ENCODE measurements at regions of chr15 and their contacts with region 1.

Region 1: DNA sequence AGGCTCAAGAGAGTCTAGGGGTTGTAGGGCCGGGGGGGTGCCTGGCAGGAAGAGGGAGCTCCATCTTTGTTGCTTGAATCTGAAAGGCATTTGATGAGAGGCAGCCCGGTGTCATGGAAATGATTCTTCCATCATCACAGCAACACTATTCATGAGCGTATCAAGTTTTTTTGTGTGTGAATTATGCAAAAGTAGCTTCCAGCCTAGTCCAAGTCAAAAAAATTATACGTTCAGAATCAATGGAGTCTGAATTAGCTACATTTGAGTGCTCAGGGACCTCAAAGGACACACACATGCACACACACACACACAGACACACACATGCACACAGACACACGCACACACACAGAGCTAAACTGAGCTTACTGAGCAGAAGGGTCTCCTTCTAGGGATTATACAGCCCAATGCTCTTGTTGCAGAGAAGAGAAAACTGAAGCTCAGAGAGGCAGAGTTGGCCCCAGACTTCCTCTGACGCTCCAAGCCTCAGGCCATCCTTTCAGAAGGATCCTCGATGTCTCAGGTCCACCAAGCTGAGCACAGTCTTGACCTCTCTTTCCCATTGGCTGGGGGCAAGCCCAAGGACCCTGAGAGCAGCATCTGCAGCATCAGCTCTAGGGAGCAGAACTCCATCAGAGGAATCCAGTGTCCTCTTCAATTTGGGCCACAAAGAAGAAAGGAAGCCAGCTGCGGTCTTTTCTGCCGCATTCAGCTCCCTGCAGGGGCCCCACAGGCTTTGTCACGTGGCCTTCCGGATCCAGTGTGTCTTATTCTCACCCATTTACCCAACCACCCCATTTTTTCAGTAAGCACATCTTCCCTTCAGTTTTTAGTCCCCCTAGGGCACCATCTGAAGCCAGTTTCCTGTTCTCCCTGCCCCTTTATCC is 228.0 kb downstream of the UACA start:
- DNase-seq: peak; percentile 25 to 81 (median 67)
- ATAC-seq: peak; percentile 77
- H3K4me3 ChIP-seq: peak overlapping the region; percentile 63 to 67
- H3K4me3 Mint-ChIP-seq: peak overlapping the region; percentile 86
- H3K27ac ChIP-seq: peak overlapping the region; percentile 61 to 78
- H3K27ac Mint-ChIP-seq: peak overlapping the region; percentile 94
- H3K4me1 ChIP-seq: peaks cover 46% of the 10 kb centered on the region
- H3K4me1 Mint-ChIP-seq: peaks cover 75% of the 10 kb centered on the region
- H3K27me3 ChIP-seq: no peaks in the 10 kb centered on the region
- H3K27me3 Mint-ChIP-seq: no peaks in the 10 kb centered on the region
- CTCF ChIP-seq: no peak

Region 2: DNA sequence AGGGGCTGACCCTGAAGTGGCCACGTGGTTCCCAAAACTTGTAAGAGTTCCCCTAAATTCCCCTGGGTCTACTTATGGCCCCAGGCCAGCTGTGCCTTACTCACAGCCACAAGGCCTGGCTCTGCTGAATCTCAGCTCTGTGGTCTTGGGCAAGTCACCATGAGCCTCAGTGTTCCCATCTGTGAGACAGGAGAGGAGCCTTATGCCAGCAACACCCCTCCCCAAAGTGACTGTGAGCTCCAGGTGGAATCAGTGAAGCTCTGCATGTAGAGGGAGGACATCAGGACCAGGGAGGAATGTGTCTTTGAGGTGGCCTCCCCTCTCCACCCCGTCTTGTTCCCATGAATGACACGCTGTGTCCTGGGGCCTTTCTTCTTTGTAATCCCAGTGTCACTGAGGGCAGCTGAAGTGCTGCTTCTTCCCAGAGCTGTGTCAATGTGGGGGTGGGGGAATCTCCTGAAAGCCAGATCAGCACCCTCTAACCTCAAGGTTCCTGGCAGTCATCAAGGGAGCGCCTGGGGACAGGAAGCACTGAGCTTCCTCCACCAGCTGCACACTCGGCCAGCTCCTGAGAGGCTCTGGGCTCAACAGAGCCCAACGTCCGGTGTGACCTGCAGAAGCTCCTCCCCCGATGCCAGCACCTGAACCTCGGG is 30.9 kb before region 1 on chr15:
- CTCF ChIA-PET with region 1: interaction called, 3 read pairs
- POLR2A ChIA-PET with region 1: interaction called, 14 read pairs
- intact Hi-C with region 1: no loop called
- DNase-seq: peak in 2 of 9 experiments; percentile 18 to 49
- ATAC-seq: no peak
- H3K4me3 ChIP-seq: peak overlapping the region in 1 of 2 experiments; percentile 13
- H3K4me3 Mint-ChIP-seq: peak overlapping the region; percentile 53
- H3K27ac ChIP-seq: no peak overlapping the region
- H3K27ac Mint-ChIP-seq: no peak overlapping the region
- H3K4me1 ChIP-seq: peaks cover 45% of the 10 kb centered on the region
- H3K4me1 Mint-ChIP-seq: peaks cover 57% of the 10 kb centered on the region
- H3K27me3 ChIP-seq: no peaks in the 10 kb centered on the region
- H3K27me3 Mint-ChIP-seq: no peaks in the 10 kb centered on the region
- CTCF ChIP-seq: no peak

Region 3: DNA sequence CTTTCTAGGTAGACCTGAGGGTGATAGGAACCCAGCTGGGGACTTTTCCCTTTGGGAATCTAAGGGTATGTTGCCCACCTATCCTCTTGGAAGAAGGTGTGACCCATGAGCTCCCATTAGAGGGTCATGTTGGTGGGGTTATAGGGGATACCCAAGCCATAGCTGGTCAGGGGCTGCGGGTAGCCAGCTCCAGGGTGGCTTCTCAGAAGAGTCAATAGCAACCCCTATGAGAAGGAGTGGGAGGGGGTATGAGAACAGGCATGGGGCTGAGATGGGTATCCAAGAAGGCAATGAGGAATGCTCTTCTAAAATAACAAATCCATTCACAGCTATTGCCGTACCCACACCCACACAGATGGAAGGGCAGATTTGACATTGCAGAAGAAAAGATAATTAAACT is 10.2 kb after region 1 on chr15:
- CTCF ChIA-PET with region 1: interaction called, 4 read pairs
- POLR2A ChIA-PET with region 1: interaction called, 10 read pairs
- intact Hi-C with region 1: no loop called
- DNase-seq: peak in 1 of 9 experiments; percentile 36
- ATAC-seq: no peak
- H3K4me3 ChIP-seq: no peak overlapping the region
- H3K4me3 Mint-ChIP-seq: no peak overlapping the region
- H3K27ac ChIP-seq: no peak overlapping the region
- H3K27ac Mint-ChIP-seq: no peak overlapping the region
- H3K4me1 ChIP-seq: no peaks in the 10 kb centered on the region
- H3K4me1 Mint-ChIP-seq: peaks cover 30% of the 10 kb centered on the region
- H3K27me3 ChIP-seq: no peaks in the 10 kb centered on the region
- H3K27me3 Mint-ChIP-seq: no peaks in the 10 kb centered on the region
- CTCF ChIP-seq: no peak

Measured in CD8-positive, alpha-beta T cell (primary cell).